WTC11 (cell line): ENCODE measurements at regions of chr1 and their contacts with region 1.

Region 1: GRCh38 chr1:26016388-26017188 is 5.0 kb upstream of the EXTL1 start:
- DNase-seq: no peak
- ATAC-seq: no peak
- H3K4me3 Mint-ChIP-seq: no peak overlapping the region
- H3K27ac Mint-ChIP-seq: no peak overlapping the region
- H3K4me1 Mint-ChIP-seq: peaks cover 26% of the 10 kb centered on the region
- H3K27me3 Mint-ChIP-seq: no peaks in the 10 kb centered on the region; the same call in 1 of the 2 replicates
- CTCF ChIP-seq: no peak

Region 2: DNA sequence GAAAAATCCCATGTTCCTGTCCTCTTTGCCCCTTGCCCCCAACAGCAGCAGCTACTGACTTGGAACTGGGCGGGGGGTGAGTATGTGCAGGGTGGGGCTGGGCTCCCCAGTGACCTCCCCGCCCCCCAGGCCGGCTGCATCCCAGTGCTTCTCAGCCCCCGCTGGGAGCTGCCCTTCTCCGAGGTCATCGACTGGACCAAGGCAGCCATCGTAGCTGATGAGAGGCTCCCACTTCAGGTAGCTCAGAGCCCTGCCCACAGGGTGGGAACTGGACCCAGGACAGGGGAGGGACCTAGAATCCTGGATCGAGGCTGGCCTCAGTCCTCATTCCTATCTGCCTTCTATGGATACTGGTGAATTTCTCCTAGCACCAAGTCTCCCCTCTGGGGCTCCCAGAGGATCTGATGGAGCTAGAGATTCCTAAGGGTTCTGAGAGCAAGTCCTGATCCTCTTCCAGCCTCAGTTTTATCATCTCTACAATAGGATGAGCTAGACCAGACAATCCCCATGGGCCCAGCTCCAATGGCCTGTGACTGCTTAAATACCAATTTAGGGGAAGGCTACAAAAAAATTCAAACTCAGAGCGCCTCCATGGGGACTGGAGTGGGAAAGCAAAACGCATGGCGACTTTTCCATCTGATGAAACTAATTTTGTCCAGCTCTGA is 13.0 kb after region 1 on chr1:
- CTCF ChIA-PET with region 1: interaction called, 22 read pairs
- POLR2A ChIA-PET with region 1: no interaction called
- DNase-seq: no peak
- ATAC-seq: peak; percentile 34
- H3K4me3 Mint-ChIP-seq: no peak overlapping the region
- H3K27ac Mint-ChIP-seq: no peak overlapping the region
- H3K4me1 Mint-ChIP-seq: peaks cover 6% of the 10 kb centered on the region; the same call in 1 of the 2 replicates
- H3K27me3 Mint-ChIP-seq: peaks cover 31% of the 10 kb centered on the region
- CTCF ChIP-seq: no peak